ENCODE measurements at regions of chr4 and their contacts with region 1.

Region 1: GRCh38 chr4:129641179-129641578 is 545.2 kb downstream of the C4orf33 start:
- DNase-seq: peak; percentile 13
- CTCF ChIP-seq: peak; percentile 80

Region 2: GRCh38 chr4:128782076-128782715 is 859.0 kb before region 1 on chr4:
- CTCF ChIA-PET with region 1: interaction called, 12 read pairs
- POLR2A ChIA-PET with region 1: no interaction called
- DNase-seq: peak; percentile 35
- CTCF ChIP-seq: peak; percentile 46

Region 3: GRCh38 chr4:129355516-129355915 is 285.7 kb before region 1 on chr4:
- CTCF ChIA-PET with region 1: interaction called, 86 read pairs
- POLR2A ChIA-PET with region 1: no interaction called
- DNase-seq: no peak
- CTCF ChIP-seq: no peak

Region 4: GRCh38 chr4:129362674-129363274 is 278.4 kb before region 1 on chr4:
- CTCF ChIA-PET with region 1: interaction called, 86 read pairs
- POLR2A ChIA-PET with region 1: no interaction called
- DNase-seq: peak; percentile 45
- CTCF ChIP-seq: peak; percentile 80

Region 5: DNA sequence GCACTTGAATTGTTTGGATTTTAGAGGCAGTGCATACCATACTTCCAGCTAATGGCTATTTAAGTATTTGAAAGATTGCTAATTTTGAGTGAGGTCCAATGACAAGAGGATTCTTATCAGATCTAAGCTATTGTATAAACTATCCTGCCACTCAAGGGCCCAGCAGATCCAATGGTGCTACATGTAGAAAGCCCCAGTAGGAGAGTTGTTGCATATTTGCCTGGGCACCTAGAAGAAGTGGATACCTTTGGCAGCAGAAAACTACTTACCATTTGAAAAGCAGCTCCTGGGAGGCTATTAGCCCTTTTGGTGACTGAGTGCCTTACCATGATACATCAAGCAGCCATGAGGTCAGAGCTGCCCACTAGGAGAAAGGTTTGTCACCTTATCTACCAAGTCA is 97.9 kb before region 1 on chr4:
- CTCF ChIA-PET with region 1: no interaction called
- POLR2A ChIA-PET with region 1: no interaction called
- DNase-seq: no peak
- CTCF ChIP-seq: no peak

Region 6: DNA sequence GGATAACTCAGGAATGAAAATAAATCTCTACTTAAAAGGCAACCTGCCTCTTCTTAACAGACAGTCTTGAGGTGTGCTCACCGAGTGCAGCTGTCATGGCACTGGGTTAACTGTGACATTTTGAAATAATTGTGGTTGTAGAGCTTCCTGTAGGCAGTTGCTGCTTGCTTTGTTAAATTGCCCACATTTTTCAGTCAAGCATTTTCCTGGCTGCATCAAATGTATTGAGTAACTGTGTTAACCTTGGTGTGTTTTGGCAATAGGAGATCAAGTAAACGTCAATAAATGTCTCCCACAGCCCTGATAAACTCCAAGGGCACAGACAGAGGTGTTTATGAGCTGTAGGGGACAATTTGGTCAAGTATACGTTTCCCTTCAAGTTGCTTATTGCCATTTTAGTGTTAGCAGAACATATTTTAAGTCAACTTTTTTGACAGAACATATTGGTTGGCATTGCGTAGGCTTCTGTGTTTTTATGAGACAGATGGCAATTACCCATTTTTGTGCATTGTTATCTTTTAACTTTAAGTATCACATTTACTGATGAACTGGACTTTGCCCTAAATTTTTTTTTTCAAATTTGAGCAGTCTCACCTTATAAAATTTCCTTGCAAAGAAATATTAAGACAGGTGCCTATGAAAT is 17.8 kb before region 1 on chr4:
- CTCF ChIA-PET with region 1: interaction called, 14 read pairs
- POLR2A ChIA-PET with region 1: no interaction called
- DNase-seq: no peak
- CTCF ChIP-seq: no peak

Measured in GM10248 (cell line).